IMR-90 (cell line): ENCODE measurements at regions of chr6 and their contacts with region 1.

Region 1: DNA sequence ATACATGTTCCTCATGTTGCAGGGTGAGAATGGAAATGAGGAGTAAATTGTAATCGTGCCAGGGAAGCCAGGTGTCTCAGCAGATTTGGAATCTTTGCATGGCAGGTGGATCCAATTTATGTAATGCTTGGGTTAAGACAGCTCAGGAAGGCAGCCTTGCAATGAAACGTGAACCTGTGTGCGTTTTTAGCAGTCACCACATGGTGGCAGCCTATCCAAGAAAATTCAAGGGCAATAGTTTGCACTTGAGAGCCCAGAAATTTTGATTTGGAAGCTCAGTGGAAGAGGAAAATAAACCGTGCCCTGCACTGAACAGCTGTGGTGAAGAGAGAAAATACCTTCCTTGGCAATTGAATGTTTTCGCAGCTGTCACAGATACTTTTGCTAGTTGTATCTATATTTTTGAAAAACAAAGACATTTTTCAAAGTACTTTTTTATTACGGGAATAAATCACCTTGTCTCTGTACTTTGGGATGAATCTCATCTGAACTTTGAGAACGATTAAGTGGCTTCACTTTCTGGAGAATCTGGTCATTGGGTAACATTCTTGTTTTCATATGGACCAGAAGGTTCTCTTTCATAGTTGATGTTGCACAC is 26.5 kb downstream of the MTHFD1L start:
- DNase-seq: peak; percentile 88
- ATAC-seq: peak; percentile 83
- H3K4me3 ChIP-seq: no peak overlapping the region
- H3K27ac ChIP-seq: peak overlapping the region; percentile 83; the same call in 1 of the 2 replicates
- H3K4me1 ChIP-seq: peaks cover 13% of the 10 kb centered on the region
- H3K27me3 ChIP-seq: no peaks in the 10 kb centered on the region
- CTCF ChIP-seq: peak; percentile 77
- POLR2A ChIP-seq: no peak
- RAD21 ChIP-seq: peak; percentile 78

Region 2: DNA sequence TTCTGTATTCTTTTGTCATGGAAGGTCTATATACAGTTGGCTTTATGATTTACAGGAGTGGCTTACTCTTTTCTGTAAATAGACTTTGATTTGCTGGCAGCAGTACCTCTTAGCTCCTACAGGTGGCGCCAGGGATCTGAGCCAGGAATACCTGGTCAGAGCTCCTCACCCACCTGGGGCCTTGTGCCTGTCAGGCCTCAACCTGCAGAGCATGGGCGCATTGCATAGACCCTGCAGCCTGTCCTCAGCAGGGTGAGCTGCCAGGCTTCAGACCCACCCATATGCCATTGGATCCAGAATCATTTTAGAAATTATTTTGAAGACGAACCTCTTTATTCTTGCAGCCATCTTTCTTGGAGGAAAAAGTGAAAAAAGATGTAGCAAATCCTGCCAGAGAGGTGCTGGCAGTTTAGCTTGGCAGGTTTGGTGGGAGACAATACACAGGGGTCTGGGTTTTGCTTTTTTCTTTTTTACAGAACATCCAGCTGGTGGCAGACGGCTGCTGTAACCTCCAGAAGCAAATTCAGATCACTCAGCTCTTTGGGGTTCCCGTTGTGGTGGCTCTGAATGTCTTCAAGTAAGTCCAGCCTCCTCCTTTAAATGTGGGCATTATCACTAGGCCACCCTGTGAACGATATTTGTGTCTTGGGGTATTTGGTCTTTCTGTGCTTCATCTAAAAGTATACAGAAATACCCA is 122.6 kb after region 1 on chr6:
- CTCF ChIA-PET with region 1: interaction called, 5 read pairs
- POLR2A ChIA-PET with region 1: no interaction called
- dilution Hi-C with region 1: no loop called
- in situ Hi-C with region 1: no loop called
- intact Hi-C with region 1: loop called (anchors 5 kb)
- DNase-seq: peak; percentile 71
- ATAC-seq: peak; percentile 43
- H3K4me3 ChIP-seq: no peak overlapping the region
- H3K27ac ChIP-seq: peak overlapping the region; percentile 88
- H3K4me1 ChIP-seq: peaks cover 20% of the 10 kb centered on the region
- H3K27me3 ChIP-seq: no peaks in the 10 kb centered on the region
- CTCF ChIP-seq: peak; percentile 77
- POLR2A ChIP-seq: no peak
- RAD21 ChIP-seq: peak; percentile 81

Region 3: DNA sequence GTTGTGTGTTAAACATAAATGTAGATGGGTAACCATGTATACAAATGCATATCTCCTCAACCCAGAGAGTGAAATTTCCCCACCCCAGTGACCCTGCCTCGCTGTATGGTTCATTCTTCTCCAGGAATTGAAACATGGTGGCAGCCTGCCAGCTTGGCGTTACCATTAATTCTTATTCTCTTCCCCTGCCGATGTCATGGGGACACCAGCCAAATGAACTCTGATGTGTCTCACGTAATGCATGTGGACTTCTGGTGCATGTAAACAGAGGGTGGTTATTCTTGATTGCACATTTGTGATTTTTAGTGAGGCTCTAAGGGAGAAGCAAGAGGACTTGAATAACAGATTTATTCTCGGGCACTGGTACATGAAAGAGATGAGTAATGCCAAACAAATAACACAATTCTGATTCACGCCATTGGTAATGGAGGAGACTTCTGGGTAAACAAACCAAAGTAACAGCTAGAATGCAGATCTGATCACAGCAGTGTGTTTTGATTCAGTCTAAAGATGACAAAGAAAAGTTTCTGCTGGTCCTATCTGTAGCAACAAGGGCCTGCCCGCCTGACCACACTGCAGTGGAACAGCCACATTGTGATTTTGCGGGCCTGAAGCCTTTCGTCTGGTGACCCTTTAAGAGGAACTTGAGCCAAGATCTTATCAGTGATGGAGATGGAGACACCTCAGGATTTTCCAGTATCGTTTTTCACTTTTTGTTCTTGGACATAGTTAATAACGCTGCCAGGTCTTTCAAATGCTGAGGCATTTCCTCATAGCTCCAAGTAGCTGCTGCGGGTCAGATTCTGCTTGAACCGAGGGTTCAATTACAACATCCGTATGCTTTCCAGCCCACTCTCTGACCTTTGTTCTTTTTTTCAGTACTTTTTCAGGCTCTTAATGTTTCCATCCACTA is 176.0 kb after region 1 on chr6:
- CTCF ChIA-PET with region 1: no interaction called
- POLR2A ChIA-PET with region 1: no interaction called
- dilution Hi-C with region 1: no loop called
- in situ Hi-C with region 1: no loop called
- intact Hi-C with region 1: loop called (anchors 10 kb)
- DNase-seq: peak; percentile 97
- ATAC-seq: peak; percentile 72
- H3K4me3 ChIP-seq: no peak overlapping the region
- H3K27ac ChIP-seq: peak overlapping the region; percentile 90
- H3K4me1 ChIP-seq: peaks cover 24% of the 10 kb centered on the region
- H3K27me3 ChIP-seq: no peaks in the 10 kb centered on the region
- CTCF ChIP-seq: no peak
- POLR2A ChIP-seq: no peak; the same call in 1 of the 2 replicates
- RAD21 ChIP-seq: no peak; the same call in 1 of the 2 replicates

Region 4: DNA sequence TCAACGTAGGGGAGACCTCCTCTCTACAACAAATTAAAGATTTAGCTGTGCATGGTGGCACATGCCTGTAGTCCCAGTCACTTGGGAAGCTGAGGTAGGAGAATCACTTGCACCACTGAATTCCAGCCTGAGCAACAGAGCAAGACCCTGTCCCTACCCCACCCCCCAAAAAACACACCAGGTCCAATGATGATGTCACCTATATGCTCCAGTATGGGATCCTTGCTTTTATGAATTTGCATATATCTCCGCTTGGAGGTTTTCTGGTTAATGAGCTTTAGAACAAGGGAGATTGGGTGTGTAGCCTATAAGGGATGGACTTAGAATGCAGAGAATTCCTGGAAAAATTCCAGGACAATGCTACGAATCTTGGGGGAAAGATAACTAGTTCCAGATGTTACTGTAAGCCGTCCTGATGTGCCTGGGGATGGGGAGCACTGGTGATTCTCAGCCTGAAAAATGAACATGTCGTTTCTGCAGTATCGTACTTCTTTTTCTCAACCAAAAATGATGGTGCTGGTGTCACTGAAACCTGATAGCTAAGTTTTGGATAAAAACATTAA is 438.2 kb after region 1 on chr6:
- CTCF ChIA-PET with region 1: interaction called, 55 read pairs
- POLR2A ChIA-PET with region 1: no interaction called
- dilution Hi-C with region 1: no loop called
- in situ Hi-C with region 1: loop called (anchors 5 kb)
- intact Hi-C with region 1: loop called (anchors 1 kb)
- DNase-seq: peak; percentile 88
- ATAC-seq: peak; percentile 66
- H3K4me3 ChIP-seq: no peak overlapping the region
- H3K27ac ChIP-seq: no peak overlapping the region
- H3K4me1 ChIP-seq: peaks cover 5% of the 10 kb centered on the region; the same call in 1 of the 2 replicates
- H3K27me3 ChIP-seq: no peaks in the 10 kb centered on the region
- CTCF ChIP-seq: no peak
- POLR2A ChIP-seq: no peak
- RAD21 ChIP-seq: no peak

Region 5: GRCh38 chr6:151339369-151339768 is 447.4 kb after region 1 on chr6:
- CTCF ChIA-PET with region 1: interaction called, 30 read pairs
- POLR2A ChIA-PET with region 1: no interaction called
- dilution Hi-C with region 1: no loop called
- in situ Hi-C with region 1: loop called (anchors 5 kb)
- intact Hi-C with region 1: loop called (anchors 1 kb)
- DNase-seq: no peak
- ATAC-seq: no peak
- H3K4me3 ChIP-seq: no peak overlapping the region
- H3K27ac ChIP-seq: no peak overlapping the region
- H3K4me1 ChIP-seq: no peaks in the 10 kb centered on the region
- H3K27me3 ChIP-seq: no peaks in the 10 kb centered on the region
- CTCF ChIP-seq: no peak
- POLR2A ChIP-seq: no peak
- RAD21 ChIP-seq: no peak

Region 6: GRCh38 chr6:151390276-151391032 is 498.5 kb after region 1 on chr6:
- CTCF ChIA-PET with region 1: no interaction called
- POLR2A ChIA-PET with region 1: no interaction called
- dilution Hi-C with region 1: no loop called
- in situ Hi-C with region 1: no loop called
- intact Hi-C with region 1: loop called (anchors 5 kb)
- DNase-seq: peak; percentile 98
- ATAC-seq: peak; percentile 87
- H3K4me3 ChIP-seq: peak overlapping the region; percentile 88
- H3K27ac ChIP-seq: peak overlapping the region; percentile 98
- H3K4me1 ChIP-seq: peaks cover 7% of the 10 kb centered on the region
- H3K27me3 ChIP-seq: no peaks in the 10 kb centered on the region
- CTCF ChIP-seq: 0 out of 2 replicates have a peak, but pooled peaks have one; percentile 11
- POLR2A ChIP-seq: no peak
- RAD21 ChIP-seq: no peak